ENCODE measurements at regions of chr17 and their contacts with region 1.

Region 1: GRCh38 chr17:32877164-32877764 is 340 bp upstream of the MYO1D start:
- DNase-seq: peak; percentile 97
- ATAC-seq: peak; percentile 97
- H3K4me3 ChIP-seq: peak overlapping the region; percentile 79
- H3K27ac ChIP-seq: peak overlapping the region; percentile 84
- H3K4me1 ChIP-seq: peaks cover 21% of the 10 kb centered on the region
- H3K27me3 ChIP-seq: no peaks in the 10 kb centered on the region
- CTCF ChIP-seq: peak; percentile 75

Region 2: GRCh38 chr17:32783602-32784001 is 93.7 kb before region 1 on chr17:
- intact Hi-C with region 1: loop called (anchors 10 kb)
- DNase-seq: no peak
- ATAC-seq: peak; percentile 82
- H3K4me3 ChIP-seq: no peak overlapping the region
- H3K27ac ChIP-seq: no peak overlapping the region
- H3K4me1 ChIP-seq: no peaks in the 10 kb centered on the region
- H3K27me3 ChIP-seq: no peaks in the 10 kb centered on the region
- CTCF ChIP-seq: peak; percentile 80

Region 3: GRCh38 chr17:32976131-32976530 is 98.9 kb after region 1 on chr17:
- intact Hi-C with region 1: no loop called
- DNase-seq: no peak
- ATAC-seq: no peak
- H3K4me3 ChIP-seq: no peak overlapping the region
- H3K27ac ChIP-seq: no peak overlapping the region
- H3K4me1 ChIP-seq: no peaks in the 10 kb centered on the region
- H3K27me3 ChIP-seq: no peaks in the 10 kb centered on the region
- CTCF ChIP-seq: no peak